ENCODE measurements at regions of chr5 and their contacts with region 1.

Region 1: GRCh38 chr5:99104538-99105132 is 175.8 kb upstream of the CHD1 start:
- DNase-seq: peak; percentile 20
- ATAC-seq: no peak
- H3K4me3 ChIP-seq: no peak overlapping the region
- H3K27ac ChIP-seq: no peak overlapping the region
- H3K4me1 ChIP-seq: no peaks in the 10 kb centered on the region
- H3K27me3 ChIP-seq: no peaks in the 10 kb centered on the region
- CTCF ChIP-seq: peak; percentile 68; the same call in 1 of the 2 replicates

Region 2: GRCh38 chr5:99449786-99450185 is 345.2 kb after region 1 on chr5:
- CTCF ChIA-PET with region 1: no interaction called
- POLR2A ChIA-PET with region 1: no interaction called
- in situ Hi-C with region 1: no loop called
- intact Hi-C with region 1: no loop called
- DNase-seq: no peak
- ATAC-seq: no peak
- H3K4me3 ChIP-seq: no peak overlapping the region
- H3K27ac ChIP-seq: no peak overlapping the region
- H3K4me1 ChIP-seq: no peaks in the 10 kb centered on the region
- H3K27me3 ChIP-seq: no peaks in the 10 kb centered on the region
- CTCF ChIP-seq: no peak

Region 3: GRCh38 chr5:99747342-99747741 is 642.7 kb after region 1 on chr5:
- CTCF ChIA-PET with region 1: no interaction called
- POLR2A ChIA-PET with region 1: interaction called, 16 read pairs
- in situ Hi-C with region 1: no loop called
- intact Hi-C with region 1: no loop called
- DNase-seq: no peak
- ATAC-seq: no peak
- H3K4me3 ChIP-seq: no peak overlapping the region
- H3K27ac ChIP-seq: no peak overlapping the region
- H3K4me1 ChIP-seq: no peaks in the 10 kb centered on the region
- H3K27me3 ChIP-seq: no peaks in the 10 kb centered on the region
- CTCF ChIP-seq: no peak

Region 4: DNA sequence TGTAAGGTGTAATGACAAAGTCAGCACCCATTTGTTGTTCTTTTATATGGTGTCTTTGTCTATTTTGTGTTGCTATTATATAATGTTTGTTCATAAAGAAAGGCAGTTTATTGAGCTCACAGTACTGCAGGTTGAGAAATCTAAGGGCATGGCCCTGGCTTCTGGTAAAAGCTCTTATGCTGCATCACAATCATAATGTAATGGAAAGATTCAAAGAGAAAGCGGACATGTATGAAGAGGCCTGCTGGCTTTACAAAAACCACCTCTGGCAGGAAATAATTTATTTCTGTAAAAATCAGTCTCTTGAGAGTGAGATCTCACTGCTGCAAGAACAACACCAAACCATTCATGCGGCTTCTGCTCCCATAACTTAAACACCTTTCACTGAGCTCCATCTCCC is 683.8 kb after region 1 on chr5:
- CTCF ChIA-PET with region 1: interaction called, 12 read pairs
- POLR2A ChIA-PET with region 1: no interaction called
- in situ Hi-C with region 1: no loop called
- intact Hi-C with region 1: no loop called
- DNase-seq: no peak
- ATAC-seq: no peak
- H3K4me3 ChIP-seq: no peak overlapping the region
- H3K27ac ChIP-seq: no peak overlapping the region
- H3K4me1 ChIP-seq: no peaks in the 10 kb centered on the region
- H3K27me3 ChIP-seq: no peaks in the 10 kb centered on the region
- CTCF ChIP-seq: no peak

Region 5: GRCh38 chr5:100479079-100479688 is 1374.5 kb after region 1 on chr5:
- CTCF ChIA-PET with region 1: interaction called, 12 read pairs
- POLR2A ChIA-PET with region 1: no interaction called
- in situ Hi-C with region 1: no loop called
- intact Hi-C with region 1: no loop called
- DNase-seq: peak; percentile 10
- ATAC-seq: no peak
- H3K4me3 ChIP-seq: no peak overlapping the region
- H3K27ac ChIP-seq: no peak overlapping the region
- H3K4me1 ChIP-seq: no peaks in the 10 kb centered on the region
- H3K27me3 ChIP-seq: no peaks in the 10 kb centered on the region
- CTCF ChIP-seq: peak; percentile 71